ENCODE measurements at regions of chr5 and their contacts with region 1.

Region 1: DNA sequence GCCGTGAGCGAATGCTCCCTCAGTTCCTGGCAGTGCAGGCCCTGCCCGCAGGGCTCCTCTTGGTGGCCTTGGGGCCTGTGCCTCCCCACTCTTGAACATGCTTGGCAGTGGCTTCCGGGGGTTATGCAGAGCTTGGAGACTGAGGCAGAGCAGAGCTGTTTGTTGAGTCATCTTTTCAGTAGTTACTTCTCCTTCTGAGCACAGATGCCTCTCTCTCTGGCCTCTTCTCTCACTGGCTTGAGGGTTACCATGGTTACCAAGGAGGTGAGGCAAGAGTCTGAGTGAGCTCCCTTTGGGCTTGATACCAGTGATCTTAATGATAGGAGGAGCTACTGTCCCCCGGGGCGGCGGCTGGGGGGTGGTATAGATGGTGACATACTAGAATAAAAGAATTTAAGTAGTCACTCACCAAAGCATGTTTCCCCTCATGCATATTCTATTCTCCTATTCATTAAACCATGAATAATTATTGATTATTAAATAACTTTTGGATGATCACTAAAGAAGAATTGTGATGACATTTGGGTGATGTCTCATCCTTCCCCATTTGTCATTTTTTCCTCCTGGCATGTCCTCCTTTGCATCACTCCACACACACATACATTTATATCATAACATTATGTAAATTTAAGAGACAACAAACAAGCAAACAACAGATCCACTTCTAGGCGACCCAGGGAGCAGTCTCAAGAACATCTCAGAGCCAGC is 111.1 kb downstream of the ARHGAP26 start:
- DNase-seq: no peak
- ATAC-seq: peak in 1 of 4 donors; percentile 44
- H3K4me3 ChIP-seq: no peak overlapping the region
- H3K27ac ChIP-seq: no peak overlapping the region
- H3K4me1 ChIP-seq: peaks cover 8% of the 10 kb centered on the region
- H3K27me3 ChIP-seq: no peaks in the 10 kb centered on the region
- CTCF ChIP-seq: no peak

Region 2: DNA sequence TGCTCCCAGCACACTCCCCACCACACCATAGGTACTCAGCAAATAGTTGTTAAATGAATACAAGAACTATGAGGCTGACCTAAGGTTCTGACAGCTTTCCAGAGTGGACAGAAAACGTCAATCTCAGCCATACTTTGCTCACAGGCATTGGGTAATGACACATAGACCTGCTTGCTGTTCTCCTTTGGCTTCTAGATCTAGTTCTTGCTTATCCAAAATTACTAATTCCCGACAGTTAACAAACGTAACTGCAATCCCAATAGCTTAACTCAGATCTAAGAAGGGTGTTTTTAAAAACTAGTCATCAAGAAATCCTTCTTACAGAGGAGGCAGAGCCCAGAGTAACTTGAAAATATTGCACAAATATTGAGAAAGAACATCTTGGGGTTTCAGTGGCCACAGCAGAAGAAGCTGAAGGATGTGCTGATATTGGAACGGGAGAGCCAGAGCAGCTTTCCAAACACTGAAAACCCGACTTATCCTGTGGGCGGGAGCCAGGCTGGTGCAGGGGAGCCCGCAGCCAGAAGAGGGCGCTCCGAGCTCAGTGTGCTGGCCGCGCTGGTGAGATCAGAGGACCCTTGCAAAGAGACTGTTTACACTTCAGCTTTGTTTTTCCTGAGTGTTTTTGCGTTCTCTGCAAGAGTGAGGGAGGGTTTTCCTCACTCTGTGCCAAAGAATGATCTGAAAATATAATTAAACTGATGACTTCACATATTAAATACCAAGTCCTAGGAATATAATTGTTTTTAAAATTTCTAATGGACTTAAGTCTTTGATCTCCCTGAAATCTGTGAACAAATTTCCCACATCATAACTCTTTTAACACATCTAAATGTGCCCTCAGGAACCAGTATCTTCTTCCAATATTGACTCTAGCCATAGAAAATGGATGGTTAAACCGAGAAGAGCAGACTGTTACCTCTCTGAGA is 225.6 kb before region 1 on chr5:
- intact Hi-C with region 1: loop called in 1 of 2 experiments (anchors 5 kb)
- DNase-seq: peak; percentile 84 to 91
- ATAC-seq: peak; percentile 91 to 98 (median 95)
- H3K4me3 ChIP-seq: no peak overlapping the region
- H3K27ac ChIP-seq: no peak overlapping the region
- H3K4me1 ChIP-seq: peaks cover 7% of the 10 kb centered on the region
- H3K27me3 ChIP-seq: no peaks in the 10 kb centered on the region
- CTCF ChIP-seq: peak; percentile 99

Region 3: DNA sequence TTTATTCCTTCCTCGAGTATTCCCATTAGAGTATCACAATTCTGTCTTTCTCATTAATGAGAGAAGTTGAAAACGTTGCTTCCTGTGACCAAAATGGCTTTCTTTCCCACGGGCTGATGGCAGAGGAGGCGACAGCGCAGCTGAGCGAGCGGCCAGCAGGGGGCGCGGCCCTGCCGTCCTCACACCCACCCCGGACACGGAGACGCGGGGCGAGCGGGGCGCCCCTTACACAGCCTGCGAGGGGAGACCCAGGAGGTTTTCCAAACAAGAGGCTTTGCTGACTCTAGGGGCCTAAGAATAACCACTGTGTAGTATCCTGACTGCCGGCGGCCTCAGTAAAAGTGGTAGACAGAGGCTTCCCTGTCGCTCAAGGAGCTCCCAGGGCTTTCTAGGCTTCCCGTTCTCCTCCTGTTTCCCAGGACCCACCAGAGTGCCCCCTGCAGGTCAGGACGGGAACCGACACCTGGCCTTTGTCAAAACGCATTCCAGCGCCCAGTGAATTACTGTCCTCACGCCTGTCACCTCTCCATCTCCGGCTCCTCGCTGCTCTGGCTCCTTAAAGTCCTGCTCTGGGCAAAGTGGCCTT is 168.0 kb before region 1 on chr5:
- intact Hi-C with region 1: loop called (anchors 2 to 5 kb)
- DNase-seq: peak; percentile 85 to 92
- ATAC-seq: peak; percentile 94 to 98 (median 97)
- H3K4me3 ChIP-seq: peak overlapping the region; percentile 69
- H3K27ac ChIP-seq: peak overlapping the region; percentile 80
- H3K4me1 ChIP-seq: no peaks in the 10 kb centered on the region
- H3K27me3 ChIP-seq: no peaks in the 10 kb centered on the region
- CTCF ChIP-seq: peak; percentile 94

Region 4: DNA sequence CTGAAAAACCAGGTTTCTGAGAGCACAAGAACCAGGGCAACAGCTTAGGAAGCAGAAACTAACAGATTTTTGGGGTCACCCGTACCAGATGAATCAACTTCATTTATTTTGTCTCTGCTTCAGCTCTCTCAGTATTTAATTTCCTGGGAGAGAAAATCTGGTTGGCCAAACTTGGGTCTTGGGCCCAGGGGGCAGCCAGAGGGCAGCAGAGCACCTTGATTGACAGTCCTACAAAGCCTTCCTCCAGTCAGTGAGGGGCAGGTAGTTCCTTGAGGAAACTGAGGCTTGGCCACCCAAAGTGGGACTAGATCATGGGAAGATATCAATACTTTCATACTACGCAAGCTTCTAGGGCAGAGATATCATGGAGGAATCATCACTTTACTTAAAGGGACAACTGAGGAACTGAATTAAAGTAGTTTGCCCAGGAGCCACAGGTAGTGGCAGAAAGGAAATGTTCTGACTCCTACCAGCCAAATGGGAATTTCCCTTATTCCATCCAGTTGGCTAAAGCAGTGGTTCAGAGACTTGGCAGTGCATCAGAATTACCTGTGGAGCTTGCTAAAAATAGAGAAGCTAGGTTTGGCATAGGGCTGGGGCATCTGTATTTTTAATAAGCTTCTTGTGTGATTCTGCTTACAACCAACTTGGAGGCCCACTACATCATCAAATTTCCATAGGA is 132.5 kb before region 1 on chr5:
- intact Hi-C with region 1: loop called (anchors 2 to 5 kb)
- DNase-seq: peak in 1 of 2 donors; percentile 70
- ATAC-seq: peak; percentile 69 to 89 (median 80)
- H3K4me3 ChIP-seq: no peak overlapping the region
- H3K27ac ChIP-seq: no peak overlapping the region
- H3K4me1 ChIP-seq: peaks cover 14% of the 10 kb centered on the region
- H3K27me3 ChIP-seq: no peaks in the 10 kb centered on the region
- CTCF ChIP-seq: peak; percentile 76